CD4-positive, alpha-beta memory T cell (primary cell): ENCODE measurements at regions of chr12 and their contacts with region 1.

Region 1: DNA sequence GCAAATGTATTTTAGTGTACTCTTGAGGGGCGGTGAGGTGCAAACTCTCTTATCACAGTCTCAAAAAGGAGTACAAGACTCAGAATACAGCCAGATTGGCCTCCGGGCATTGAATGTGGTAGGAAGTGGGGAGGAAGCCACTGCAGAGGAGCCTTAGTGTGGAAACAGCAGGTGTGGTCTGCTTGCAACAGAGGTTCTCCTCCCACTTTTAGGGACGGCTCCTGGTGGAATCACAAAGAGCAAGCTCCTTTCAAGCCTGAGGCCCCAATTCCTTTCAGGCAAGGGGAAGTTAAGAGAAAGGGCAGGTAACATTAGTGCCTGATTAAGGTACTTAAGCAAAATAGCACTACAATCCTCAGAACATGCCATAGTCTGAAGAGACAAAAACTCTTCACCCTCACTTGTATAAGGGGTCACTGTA is 23.7 kb upstream of the SLC2A3 start:
- DNase-seq: peak; percentile 32 to 59 (median 55)
- H3K4me3 ChIP-seq: peak overlapping the region; percentile 30 to 54
- H3K4me3 Mint-ChIP-seq: peak overlapping the region; percentile 81 to 96 (median 92)
- H3K27ac ChIP-seq: peak overlapping the region; percentile 69
- H3K27ac Mint-ChIP-seq: peak overlapping the region; percentile 85 to 99 (median 96)
- H3K4me1 ChIP-seq: peaks cover 39% of the 10 kb centered on the region
- H3K4me1 Mint-ChIP-seq: peaks cover 26 to 44% (median 35%) of the 10 kb centered on the region in 4 donors
- H3K27me3 ChIP-seq: no peaks in the 10 kb centered on the region
- H3K27me3 Mint-ChIP-seq: no peaks in the 10 kb centered on the region

Region 2: DNA sequence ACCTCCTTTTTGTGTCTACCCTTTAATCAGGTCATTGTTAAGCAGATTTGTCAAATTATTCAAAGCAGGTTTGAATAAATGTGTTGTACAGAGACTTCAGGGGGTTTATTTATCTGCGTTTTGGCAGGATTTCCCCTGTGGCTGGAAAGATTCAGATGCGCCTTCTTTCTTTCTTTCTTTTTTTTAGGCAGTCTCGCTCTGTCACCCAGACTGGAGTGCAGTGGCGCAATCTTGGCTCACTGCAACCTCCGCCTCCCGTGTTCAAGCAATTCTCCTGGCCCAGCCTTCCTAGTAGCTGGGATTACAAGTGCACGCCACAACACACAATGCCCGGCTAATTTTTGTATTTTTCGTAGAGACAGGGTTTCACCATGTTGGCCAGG is 201.0 kb before region 1 on chr12:
- CTCF ChIA-PET with region 1: no interaction called
- POLR2A ChIA-PET with region 1: no interaction called
- intact Hi-C with region 1: no loop called
- DNase-seq: no peak
- H3K4me3 ChIP-seq: no peak overlapping the region
- H3K4me3 Mint-ChIP-seq: no peak overlapping the region
- H3K27ac ChIP-seq: no peak overlapping the region
- H3K27ac Mint-ChIP-seq: no peak overlapping the region
- H3K4me1 ChIP-seq: no peaks in the 10 kb centered on the region
- H3K4me1 Mint-ChIP-seq: peaks cover 0 to 5% (median 2%) of the 10 kb centered on the region in 4 donors
- H3K27me3 ChIP-seq: no peaks in the 10 kb centered on the region
- H3K27me3 Mint-ChIP-seq: peaks cover 0 to 4% of the 10 kb centered on the region in 2 donors

Region 3: GRCh38 chr12:7859552-7859951 is 100.2 kb before region 1 on chr12:
- CTCF ChIA-PET with region 1: interaction called, 23 read pairs
- POLR2A ChIA-PET with region 1: interaction called, 12 read pairs
- intact Hi-C with region 1: loop called (anchors 1 kb)
- DNase-seq: no peak
- H3K4me3 ChIP-seq: no peak overlapping the region
- H3K4me3 Mint-ChIP-seq: no peak overlapping the region
- H3K27ac ChIP-seq: no peak overlapping the region
- H3K27ac Mint-ChIP-seq: peak overlapping the region in 4 of 7 donors; percentile 5 to 47 (median 30)
- H3K4me1 ChIP-seq: no peaks in the 10 kb centered on the region
- H3K4me1 Mint-ChIP-seq: peaks cover 6 to 13% (median 9%) of the 10 kb centered on the region in 4 donors
- H3K27me3 ChIP-seq: no peaks in the 10 kb centered on the region
- H3K27me3 Mint-ChIP-seq: peaks cover 1 to 4% of the 10 kb centered on the region in 2 donors

Region 4: GRCh38 chr12:7884689-7885088 is 75.0 kb before region 1 on chr12:
- CTCF ChIA-PET with region 1: no interaction called
- POLR2A ChIA-PET with region 1: no interaction called
- intact Hi-C with region 1: no loop called
- DNase-seq: no peak
- H3K4me3 ChIP-seq: no peak overlapping the region
- H3K4me3 Mint-ChIP-seq: no peak overlapping the region
- H3K27ac ChIP-seq: no peak overlapping the region
- H3K27ac Mint-ChIP-seq: peak overlapping the region in 1 of 7 donors; percentile 6
- H3K4me1 ChIP-seq: no peaks in the 10 kb centered on the region
- H3K4me1 Mint-ChIP-seq: no peaks in the 10 kb centered on the region
- H3K27me3 ChIP-seq: no peaks in the 10 kb centered on the region
- H3K27me3 Mint-ChIP-seq: peaks cover 3 to 6% of the 10 kb centered on the region in 2 donors

Region 5: DNA sequence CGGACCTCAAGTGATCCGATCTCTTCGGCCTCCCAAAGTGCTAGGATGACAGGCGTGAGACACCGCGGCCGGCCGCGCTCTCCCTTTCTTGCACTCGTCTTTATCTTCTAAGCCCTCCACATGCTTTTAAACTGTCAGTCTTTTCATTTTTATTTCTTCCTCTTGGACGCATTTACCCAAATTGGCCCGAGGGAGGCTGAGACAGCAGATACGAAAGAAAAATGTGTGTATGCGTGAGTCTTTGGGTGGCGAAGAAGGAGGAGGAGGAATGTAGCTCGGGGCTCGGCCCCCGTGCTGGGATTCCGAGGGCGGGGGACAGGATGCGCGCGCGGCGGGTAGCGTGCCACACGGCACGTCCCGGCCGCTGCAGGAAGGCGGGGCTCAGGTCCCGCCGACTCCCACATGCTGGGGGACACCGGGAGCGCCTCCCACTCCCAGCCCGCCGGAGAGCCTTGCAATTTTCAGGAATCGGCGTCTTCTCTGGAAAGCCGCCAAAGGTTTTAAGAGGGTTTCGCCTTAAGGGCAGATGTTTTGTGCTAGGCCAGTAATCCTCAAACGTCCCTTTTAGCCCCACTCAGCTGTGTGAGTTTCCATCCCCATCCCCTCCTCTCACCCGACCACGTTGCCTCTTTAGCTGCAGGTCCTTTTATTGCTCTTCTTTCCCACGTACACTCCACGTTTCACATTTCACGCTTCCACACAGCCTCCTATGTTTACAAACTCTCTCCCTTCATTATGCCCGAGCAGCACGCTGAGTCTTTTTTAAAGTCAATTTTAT is 11.0 kb after region 1 on chr12:
- CTCF ChIA-PET with region 1: interaction called, 28 read pairs
- POLR2A ChIA-PET with region 1: interaction called, 110 read pairs
- intact Hi-C with region 1: loop called (anchors 1 kb)
- DNase-seq: peak; percentile 83 to 90 (median 86)
- H3K4me3 ChIP-seq: peak overlapping the region; percentile 70 to 83
- H3K4me3 Mint-ChIP-seq: peak overlapping the region; percentile 82 to 95 (median 90)
- H3K27ac ChIP-seq: peak overlapping the region; percentile 93
- H3K27ac Mint-ChIP-seq: peak overlapping the region; percentile 92 to 100 (median 98)
- H3K4me1 ChIP-seq: peaks cover 34% of the 10 kb centered on the region
- H3K4me1 Mint-ChIP-seq: peaks cover 15 to 29% (median 24%) of the 10 kb centered on the region in 4 donors
- H3K27me3 ChIP-seq: no peaks in the 10 kb centered on the region
- H3K27me3 Mint-ChIP-seq: peaks cover 0 to 3% of the 10 kb centered on the region in 2 donors

Region 6: GRCh38 chr12:7995266-7995963 is 35.7 kb after region 1 on chr12:
- CTCF ChIA-PET with region 1: interaction called, 48 read pairs
- POLR2A ChIA-PET with region 1: interaction called, 75 read pairs
- intact Hi-C with region 1: loop called (anchors 1 kb)
- DNase-seq: peak; percentile 81 to 90 (median 86)
- H3K4me3 ChIP-seq: no peak overlapping the region
- H3K4me3 Mint-ChIP-seq: no peak overlapping the region
- H3K27ac ChIP-seq: peak overlapping the region; percentile 1
- H3K27ac Mint-ChIP-seq: no peak overlapping the region
- H3K4me1 ChIP-seq: peaks cover 27% of the 10 kb centered on the region
- H3K4me1 Mint-ChIP-seq: peaks cover 9 to 14% (median 12%) of the 10 kb centered on the region in 4 donors
- H3K27me3 ChIP-seq: no peaks in the 10 kb centered on the region
- H3K27me3 Mint-ChIP-seq: no peaks in the 10 kb centered on the region

Region 7: DNA sequence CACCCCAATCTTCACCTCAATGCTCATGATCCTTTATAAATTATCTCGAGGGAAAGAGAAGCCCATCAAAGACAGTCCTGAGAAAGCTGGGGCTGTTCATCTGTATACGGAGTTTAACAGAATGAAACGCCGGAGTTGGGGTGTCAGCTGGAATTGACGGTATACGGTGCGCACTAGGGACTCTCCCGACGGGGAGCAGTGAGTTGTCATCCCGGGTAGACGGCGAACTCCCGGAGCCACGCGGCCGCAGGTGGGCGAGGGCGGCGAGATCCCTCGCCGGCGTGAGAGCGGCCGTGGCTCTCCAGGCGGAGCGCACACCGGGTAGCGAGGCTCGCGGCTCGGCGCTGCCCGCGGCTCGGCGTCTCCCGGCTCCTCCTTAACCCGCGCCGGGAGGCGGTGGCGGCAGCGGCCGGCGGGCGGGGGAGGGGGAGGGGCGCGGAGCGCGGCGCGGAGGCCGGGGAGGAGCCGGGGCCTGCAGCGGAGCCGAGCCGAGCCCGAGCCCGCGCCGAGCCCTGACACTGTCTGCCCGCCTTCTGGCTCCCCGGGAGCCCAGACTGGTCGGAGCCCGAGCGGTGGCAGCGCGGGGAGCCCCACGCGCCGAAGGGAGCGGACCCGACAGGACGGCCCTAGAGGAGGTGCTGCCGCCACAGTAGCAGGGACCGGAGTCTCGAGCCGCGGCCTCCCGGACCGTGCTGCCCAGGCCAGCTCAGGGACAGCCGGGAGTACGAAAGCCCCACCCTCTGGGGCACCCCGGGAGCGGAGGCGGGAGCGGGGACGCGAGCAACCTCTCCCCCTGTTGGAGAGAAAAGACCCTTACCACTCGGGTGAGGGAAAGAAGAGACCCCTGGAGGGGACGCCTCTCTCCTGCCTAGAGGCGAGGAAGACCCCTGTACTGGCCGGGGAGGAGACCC is 72.8 kb after region 1 on chr12 and contains the start of gene FOXJ2:
- CTCF ChIA-PET with region 1: interaction called, 6 read pairs
- POLR2A ChIA-PET with region 1: interaction called, 12 read pairs
- intact Hi-C with region 1: no loop called
- DNase-seq: peak; percentile 75 to 84 (median 82)
- H3K4me3 ChIP-seq: peak within 1 kb of the TSS; percentile 87 to 95
- H3K4me3 Mint-ChIP-seq: peak within 1 kb of the TSS; percentile 88 to 94 (median 90)
- H3K27ac ChIP-seq: peak within 1 kb of the TSS; percentile 97
- H3K27ac Mint-ChIP-seq: peak within 1 kb of the TSS; percentile 93 to 97 (median 96)
- H3K4me1 ChIP-seq: peaks cover 57% of the 10 kb centered on the region
- H3K4me1 Mint-ChIP-seq: peaks cover 41 to 56% (median 52%) of the 10 kb centered on the region in 4 donors
- H3K27me3 ChIP-seq: no peaks in the 10 kb centered on the region
- H3K27me3 Mint-ChIP-seq: no peaks in the 10 kb centered on the region
- total RNA-seq, gene FOXJ2: 32.4 to 33.4 TPM